AG04449 (cell line): ENCODE measurements at regions of chr2 and their contacts with region 1.

Region 1: GRCh38 chr2:209334198-209335017 is 89.4 kb upstream of the MAP2 start:
- DNase-seq: no peak
- H3K4me3 ChIP-seq: no peak overlapping the region
- CTCF ChIP-seq: peak; percentile 69

Region 2: DNA sequence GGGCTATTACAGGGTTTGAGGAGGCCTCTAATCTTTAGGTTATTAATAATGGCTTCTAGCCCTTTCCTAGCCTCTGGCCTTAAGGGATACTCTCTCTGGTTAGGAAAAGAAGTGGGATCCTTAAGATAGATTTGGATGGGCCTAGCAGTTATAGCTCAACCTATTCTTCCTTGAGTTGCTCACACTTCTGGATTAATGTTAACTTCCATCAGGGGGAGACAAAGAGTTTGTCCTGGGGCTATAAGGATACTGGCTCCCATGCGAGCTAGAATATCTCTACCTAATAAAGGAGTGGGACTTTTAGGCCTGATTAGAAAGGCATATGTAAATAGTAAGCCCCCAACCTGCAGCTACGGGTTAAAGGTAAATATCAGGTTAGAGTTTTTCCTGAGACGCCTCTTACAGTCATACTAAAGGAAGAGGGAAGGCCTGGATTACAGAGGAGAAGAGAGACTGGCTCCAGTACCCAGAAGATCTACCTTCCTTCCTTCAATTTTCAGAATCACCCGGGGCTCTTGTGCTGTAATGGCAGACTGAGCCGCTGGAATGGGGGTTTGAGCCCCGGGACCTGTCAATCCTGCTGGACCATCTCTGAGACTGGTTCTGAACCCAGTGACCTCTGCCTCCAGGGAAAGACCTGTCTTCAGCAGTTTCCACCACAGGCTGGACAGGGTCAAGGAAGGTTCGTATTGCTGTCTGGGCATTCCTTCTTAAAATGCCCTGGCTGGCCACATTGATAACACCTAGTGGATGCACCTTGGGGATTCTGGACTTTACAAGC is 941.9 kb before region 1 on chr2:
- CTCF ChIA-PET with region 1: interaction called, 14 read pairs
- POLR2A ChIA-PET with region 1: no interaction called
- DNase-seq: no peak
- H3K4me3 ChIP-seq: no peak overlapping the region
- CTCF ChIP-seq: no peak

Region 3: GRCh38 chr2:209351636-209352035 is 17.2 kb after region 1 on chr2:
- CTCF ChIA-PET with region 1: interaction called, 16 read pairs
- POLR2A ChIA-PET with region 1: no interaction called
- DNase-seq: peak; percentile 46
- H3K4me3 ChIP-seq: no peak overlapping the region
- CTCF ChIP-seq: no peak

Region 4: DNA sequence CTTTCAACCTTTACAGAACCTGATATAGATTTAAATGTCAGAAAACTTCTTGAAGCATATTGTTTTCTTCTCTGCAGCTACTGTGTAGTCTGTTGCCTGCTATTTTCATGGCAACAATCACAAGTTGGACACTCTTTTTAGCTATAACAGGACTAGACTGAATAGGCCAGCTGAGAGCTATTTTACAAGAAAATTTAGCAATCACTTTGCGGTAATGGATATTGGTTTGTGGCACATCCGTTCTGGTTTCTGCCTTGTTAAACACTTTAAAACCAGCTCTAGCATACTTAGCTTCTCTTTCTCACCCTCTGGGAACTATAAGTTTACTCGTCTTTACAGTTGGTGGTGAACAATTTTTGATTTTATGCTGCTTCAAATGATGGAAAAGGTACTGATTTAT is 215.2 kb after region 1 on chr2:
- CTCF ChIA-PET with region 1: interaction called, 94 read pairs
- POLR2A ChIA-PET with region 1: no interaction called
- DNase-seq: no peak
- H3K4me3 ChIP-seq: no peak overlapping the region
- CTCF ChIP-seq: no peak

Region 5: GRCh38 chr2:209565896-209566582 is 231.6 kb after region 1 on chr2:
- CTCF ChIA-PET with region 1: interaction called, 30 read pairs
- POLR2A ChIA-PET with region 1: no interaction called
- DNase-seq: no peak
- H3K4me3 ChIP-seq: no peak overlapping the region
- CTCF ChIP-seq: no peak